Naive thymus-derived CD4-positive, alpha-beta T cell (primary cell): ENCODE measurements at regions of chr9 and their contacts with region 1.

Region 1: DNA sequence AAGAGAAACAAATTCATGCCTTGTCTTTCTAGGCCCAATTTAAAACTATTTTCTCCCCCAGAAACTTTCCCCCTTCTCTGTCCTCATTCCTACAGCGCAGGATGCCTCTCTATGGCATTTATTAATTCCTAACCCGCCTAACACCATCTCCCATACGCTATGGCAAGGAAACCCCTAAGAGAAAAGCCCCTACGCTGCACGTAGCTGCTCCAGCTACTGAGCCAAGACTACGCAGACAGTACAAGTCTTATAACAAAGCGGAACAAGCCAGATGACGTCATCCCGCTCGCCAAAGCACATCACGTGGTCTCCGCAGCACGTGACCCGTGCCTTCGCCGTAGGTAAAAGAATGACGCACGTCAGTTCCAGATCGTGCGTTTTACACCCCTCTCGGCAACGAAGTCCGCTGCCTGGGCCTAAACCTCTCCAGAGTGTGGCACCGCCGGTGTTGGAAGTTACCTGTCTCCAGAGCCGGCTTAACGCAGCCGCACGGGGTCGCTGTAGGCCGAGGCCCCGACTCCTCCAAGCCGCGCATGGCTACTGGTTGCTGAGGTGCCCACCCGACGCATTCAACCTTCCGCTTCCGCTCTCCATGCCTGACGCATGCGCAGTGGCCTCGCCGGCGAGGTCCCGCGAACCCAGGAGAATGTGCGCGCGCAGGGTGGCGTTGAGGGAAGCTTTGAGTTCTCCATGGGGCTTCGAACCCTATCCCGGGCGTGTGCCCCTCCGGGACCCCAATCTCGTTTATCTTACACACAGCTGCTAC is at the start of gene TRMO:
- DNase-seq: peak; percentile 98 to 99 (median 98)
- ATAC-seq: peak; percentile 85
- H3K4me3 ChIP-seq: peak within 1 kb of the TSS; percentile 88
- H3K4me3 Mint-ChIP-seq: peak within 1 kb of the TSS; percentile 83 to 97 (median 94)
- H3K27ac ChIP-seq: peak within 1 kb of the TSS; percentile 98
- H3K27ac Mint-ChIP-seq: peak within 1 kb of the TSS; percentile 97 to 100 (median 99)
- H3K4me1 ChIP-seq: peaks cover 36 to 38% of the 10 kb centered on the region in 2 donors
- H3K4me1 Mint-ChIP-seq: peaks cover 26 to 66% (median 47%) of the 10 kb centered on the region in 7 donors
- H3K27me3 ChIP-seq: no peaks in the 10 kb centered on the region
- H3K27me3 Mint-ChIP-seq: peaks cover 0 to 5% (median 0%) of the 10 kb centered on the region in 5 donors
- total RNA-seq, gene TRMO: 26.8 to 55.3 (median 43.8) TPM

Region 2: GRCh38 chr9:97689401-97689800 is 232.7 kb before region 1 on chr9:
- CTCF ChIA-PET with region 1: no interaction called
- POLR2A ChIA-PET with region 1: no interaction called
- intact Hi-C with region 1: no loop called
- DNase-seq: no peak
- ATAC-seq: no peak
- H3K4me3 ChIP-seq: no peak overlapping the region
- H3K4me3 Mint-ChIP-seq: no peak overlapping the region
- H3K27ac ChIP-seq: no peak overlapping the region
- H3K27ac Mint-ChIP-seq: peak overlapping the region in 5 of 9 donors; percentile 4 to 75 (median 41)
- H3K4me1 ChIP-seq: peaks cover 1 to 7% of the 10 kb centered on the region in 2 donors
- H3K4me1 Mint-ChIP-seq: peaks cover 13 to 44% (median 26%) of the 10 kb centered on the region in 7 donors
- H3K27me3 ChIP-seq: no peaks in the 10 kb centered on the region
- H3K27me3 Mint-ChIP-seq: no peaks in the 10 kb centered on the region

Region 3: GRCh38 chr9:97803167-97804058 is 118.7 kb before region 1 on chr9:
- CTCF ChIA-PET with region 1: no interaction called
- POLR2A ChIA-PET with region 1: no interaction called
- intact Hi-C with region 1: loop called in 1 of 2 experiments (anchors 1 kb)
- DNase-seq: peak; percentile 59 to 77 (median 75)
- ATAC-seq: peak; percentile 98
- H3K4me3 ChIP-seq: peak overlapping the region; percentile 72
- H3K4me3 Mint-ChIP-seq: peak overlapping the region; percentile 78 to 92 (median 87)
- H3K27ac ChIP-seq: peak overlapping the region; percentile 45
- H3K27ac Mint-ChIP-seq: peak overlapping the region in 7 of 9 donors; percentile 28 to 86 (median 80)
- H3K4me1 ChIP-seq: no peaks in the 10 kb centered on the region
- H3K4me1 Mint-ChIP-seq: peaks cover 0 to 13% (median 9%) of the 10 kb centered on the region in 7 donors
- H3K27me3 ChIP-seq: no peaks in the 10 kb centered on the region
- H3K27me3 Mint-ChIP-seq: peaks cover 4 to 51% (median 17%) of the 10 kb centered on the region in 5 donors

Region 4: GRCh38 chr9:97830884-97831829 is 91.0 kb before region 1 on chr9:
- CTCF ChIA-PET with region 1: no interaction called
- POLR2A ChIA-PET with region 1: no interaction called
- intact Hi-C with region 1: no loop called
- DNase-seq: no peak
- ATAC-seq: no peak
- H3K4me3 ChIP-seq: no peak overlapping the region
- H3K4me3 Mint-ChIP-seq: no peak overlapping the region
- H3K27ac ChIP-seq: no peak overlapping the region
- H3K27ac Mint-ChIP-seq: no peak overlapping the region
- H3K4me1 ChIP-seq: no peaks in the 10 kb centered on the region
- H3K4me1 Mint-ChIP-seq: peaks cover 0 to 2% (median 0%) of the 10 kb centered on the region in 7 donors
- H3K27me3 ChIP-seq: no peaks in the 10 kb centered on the region
- H3K27me3 Mint-ChIP-seq: peaks cover 0 to 40% (median 11%) of the 10 kb centered on the region in 5 donors

Region 5: GRCh38 chr9:97938081-97938644 is 16.0 kb after region 1 on chr9 and contains the start of gene HEMGN:
- CTCF ChIA-PET with region 1: interaction called, 10 read pairs
- POLR2A ChIA-PET with region 1: interaction called, 54 read pairs
- intact Hi-C with region 1: loop called in 1 of 2 experiments (anchors 1 kb)
- DNase-seq: peak in 7 of 9 donors; percentile 38 to 74 (median 67)
- ATAC-seq: peak; percentile 97
- H3K4me3 ChIP-seq: peak within 1 kb of the TSS; percentile 10
- H3K4me3 Mint-ChIP-seq: peak within 1 kb of the TSS; percentile 40 to 81 (median 62)
- H3K27ac ChIP-seq: peak within 1 kb of the TSS; percentile 67
- H3K27ac Mint-ChIP-seq: peak within 1 kb of the TSS; percentile 82 to 94 (median 90)
- H3K4me1 ChIP-seq: peaks cover 18 to 48% of the 10 kb centered on the region in 2 donors
- H3K4me1 Mint-ChIP-seq: peaks cover 18 to 63% (median 58%) of the 10 kb centered on the region in 7 donors
- H3K27me3 ChIP-seq: no peaks in the 10 kb centered on the region
- H3K27me3 Mint-ChIP-seq: peaks cover 0 to 13% (median 0%) of the 10 kb centered on the region in 5 donors
- total RNA-seq, gene HEMGN: 1.3 to 4.3 (median 2.3) TPM

Region 6: GRCh38 chr9:97990266-97990665 is 68.1 kb after region 1 on chr9:
- CTCF ChIA-PET with region 1: interaction called, 6 read pairs
- POLR2A ChIA-PET with region 1: interaction called, 159 read pairs
- intact Hi-C with region 1: no loop called
- DNase-seq: no peak
- ATAC-seq: no peak
- H3K4me3 ChIP-seq: no peak overlapping the region
- H3K4me3 Mint-ChIP-seq: peak overlapping the region in 8 of 10 donors; percentile 1 to 92 (median 32)
- H3K27ac ChIP-seq: no peak overlapping the region
- H3K27ac Mint-ChIP-seq: peak overlapping the region; percentile 7 to 75 (median 50)
- H3K4me1 ChIP-seq: peaks cover 46 to 80% of the 10 kb centered on the region in 2 donors
- H3K4me1 Mint-ChIP-seq: peaks cover 63 to 94% (median 91%) of the 10 kb centered on the region in 7 donors
- H3K27me3 ChIP-seq: no peaks in the 10 kb centered on the region
- H3K27me3 Mint-ChIP-seq: no peaks in the 10 kb centered on the region

Region 7: DNA sequence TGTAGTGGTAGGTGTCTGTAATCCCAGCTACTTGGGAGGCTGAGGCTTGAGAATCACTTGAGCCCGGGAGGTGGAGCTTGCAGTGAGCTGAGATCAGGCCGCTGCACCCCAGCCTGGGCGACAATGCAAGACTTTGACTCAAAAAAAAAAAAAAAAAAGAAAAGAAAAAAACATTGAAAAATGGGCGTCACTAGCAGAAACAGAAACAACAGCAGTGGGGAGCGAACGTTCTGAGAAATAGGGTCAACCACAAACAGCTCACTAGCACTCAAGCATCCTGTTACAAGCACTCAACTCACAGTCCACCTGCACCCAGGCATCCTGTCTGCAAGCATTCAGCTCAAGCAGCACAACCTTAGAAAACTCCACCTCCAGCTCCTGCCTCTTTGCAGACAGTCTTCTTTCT is 179.7 kb after region 1 on chr9:
- CTCF ChIA-PET with region 1: no interaction called
- POLR2A ChIA-PET with region 1: interaction called, 10 read pairs
- intact Hi-C with region 1: loop called (anchors 1 to 2 kb)
- DNase-seq: peak; percentile 35 to 96 (median 92)
- ATAC-seq: peak; percentile 99
- H3K4me3 ChIP-seq: peak overlapping the region; percentile 31
- H3K4me3 Mint-ChIP-seq: peak overlapping the region; percentile 66 to 86 (median 77)
- H3K27ac ChIP-seq: peak overlapping the region; percentile 78
- H3K27ac Mint-ChIP-seq: peak overlapping the region; percentile 87 to 99 (median 95)
- H3K4me1 ChIP-seq: peaks cover 88 to 91% of the 10 kb centered on the region in 2 donors
- H3K4me1 Mint-ChIP-seq: peaks cover 52 to 97% (median 88%) of the 10 kb centered on the region in 7 donors
- H3K27me3 ChIP-seq: no peaks in the 10 kb centered on the region
- H3K27me3 Mint-ChIP-seq: no peaks in the 10 kb centered on the region

Region 8: DNA sequence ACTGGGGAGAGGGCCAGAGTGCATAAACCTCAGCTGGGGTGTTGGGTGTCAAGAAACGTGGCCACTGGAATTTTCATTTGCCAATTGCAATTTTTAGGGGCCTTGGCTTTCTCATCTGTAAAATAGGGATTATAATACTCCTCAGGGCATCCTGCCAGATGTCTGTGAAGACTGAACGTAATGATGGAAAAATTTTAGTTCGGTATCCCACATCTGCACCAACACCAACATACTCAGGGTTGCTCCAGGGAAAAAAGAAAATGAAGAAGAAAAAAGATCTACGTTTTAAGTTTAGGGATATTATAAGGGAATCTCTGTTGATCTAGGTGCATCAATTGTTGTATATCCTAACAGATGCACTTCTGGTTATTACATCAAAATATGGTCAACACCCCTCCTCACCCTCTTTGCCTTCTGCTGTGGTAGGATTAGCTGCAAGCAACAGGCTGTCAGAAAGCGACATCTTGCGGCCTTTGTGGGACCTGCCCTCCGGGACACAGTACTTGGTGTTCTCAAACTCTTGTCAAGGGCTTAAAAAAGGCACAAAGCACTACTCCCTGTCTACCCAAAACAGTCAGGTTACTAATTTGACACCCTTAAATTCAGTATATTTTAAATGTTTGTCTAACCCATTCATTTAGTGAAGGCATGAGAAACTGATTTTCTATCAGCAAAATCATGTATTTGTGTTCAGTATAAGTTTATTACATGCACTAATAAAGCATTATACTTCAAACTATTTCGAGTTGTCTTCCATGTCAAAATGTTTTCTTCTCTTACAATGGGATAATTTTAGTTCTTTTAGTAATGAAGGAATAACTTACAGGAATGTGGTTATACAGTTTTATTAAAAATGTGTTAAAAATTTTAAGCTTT is 341.6 kb after region 1 on chr9:
- CTCF ChIA-PET with region 1: interaction called, 7 read pairs
- POLR2A ChIA-PET with region 1: no interaction called
- intact Hi-C with region 1: loop called (anchors 1 kb)
- DNase-seq: peak; percentile 54 to 82 (median 77)
- ATAC-seq: peak; percentile 100
- H3K4me3 ChIP-seq: no peak overlapping the region
- H3K4me3 Mint-ChIP-seq: no peak overlapping the region
- H3K27ac ChIP-seq: no peak overlapping the region
- H3K27ac Mint-ChIP-seq: peak overlapping the region in 1 of 9 donors; percentile 59
- H3K4me1 ChIP-seq: no peaks in the 10 kb centered on the region
- H3K4me1 Mint-ChIP-seq: peaks cover 0 to 3% (median 0%) of the 10 kb centered on the region in 7 donors
- H3K27me3 ChIP-seq: no peaks in the 10 kb centered on the region
- H3K27me3 Mint-ChIP-seq: peaks cover 0 to 23% (median 0%) of the 10 kb centered on the region in 5 donors